ENCODE measurements at regions of chrX and their contacts with region 1.

Region 1: GRCh38 chrX:136920001-136920400 is 39.5 kb upstream of the RBMX start:
- DNase-seq: no peak
- ATAC-seq: no peak
- H3K4me3 Mint-ChIP-seq: no peak overlapping the region
- H3K27ac Mint-ChIP-seq: no peak overlapping the region
- H3K4me1 Mint-ChIP-seq: peaks cover 2% of the 10 kb centered on the region
- H3K27me3 Mint-ChIP-seq: no peaks in the 10 kb centered on the region

Region 2: GRCh38 chrX:136572030-136572429 is 348.0 kb before region 1 on chrX:
- CTCF ChIA-PET with region 1: no interaction called
- POLR2A ChIA-PET with region 1: no interaction called
- intact Hi-C with region 1: loop called in 1 of 2 experiments (anchors 5 kb)
- DNase-seq: no peak
- ATAC-seq: peak; percentile 39
- H3K4me3 Mint-ChIP-seq: no peak overlapping the region
- H3K27ac Mint-ChIP-seq: no peak overlapping the region
- H3K4me1 Mint-ChIP-seq: peaks cover 20% of the 10 kb centered on the region
- H3K27me3 Mint-ChIP-seq: no peaks in the 10 kb centered on the region

Region 3: DNA sequence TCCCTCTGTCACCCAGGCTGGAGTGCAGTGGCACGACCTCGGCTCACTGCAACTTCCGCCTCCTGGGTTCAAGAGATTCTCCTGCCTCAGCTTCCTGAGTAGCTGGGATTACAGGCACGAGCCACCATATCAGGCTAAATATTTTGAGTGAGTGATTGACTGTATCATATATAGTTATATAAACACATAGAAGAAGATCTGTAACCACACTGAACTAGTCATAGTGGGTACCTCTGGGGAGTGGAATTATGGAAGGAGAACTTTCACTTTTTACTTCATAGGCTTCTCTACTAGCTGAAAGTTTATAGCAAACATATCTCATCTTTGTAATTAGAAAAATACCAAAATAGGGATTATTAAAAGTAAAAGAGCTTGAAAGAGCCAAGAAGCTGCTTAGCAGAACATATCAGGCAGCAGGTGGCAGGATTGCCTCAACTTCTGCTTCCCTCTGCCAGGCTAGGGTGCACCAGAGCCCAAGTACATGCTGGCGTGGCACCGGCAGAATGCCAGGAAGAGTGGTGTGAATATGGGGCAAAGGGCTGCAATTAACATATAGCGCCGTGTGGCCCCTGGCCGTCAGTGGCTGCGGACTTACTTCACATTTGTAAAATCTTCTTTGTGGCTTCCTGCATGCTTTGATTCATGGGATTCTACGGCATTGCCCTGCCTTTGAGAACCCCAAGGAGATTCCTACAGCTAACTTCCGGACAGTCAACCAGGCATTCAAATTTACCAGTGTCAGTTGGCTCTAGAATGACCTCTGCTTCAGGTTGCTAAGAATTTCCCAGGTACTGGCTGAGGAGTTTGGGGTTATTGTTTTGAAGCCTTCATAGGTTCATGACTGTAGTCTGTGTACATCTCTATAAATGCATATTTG is 311.5 kb before region 1 on chrX:
- CTCF ChIA-PET with region 1: no interaction called
- POLR2A ChIA-PET with region 1: no interaction called
- intact Hi-C with region 1: loop called in 1 of 2 experiments (anchors 2 kb)
- DNase-seq: peak; percentile 79
- ATAC-seq: peak; percentile 84
- H3K4me3 Mint-ChIP-seq: peak overlapping the region; percentile 50
- H3K27ac Mint-ChIP-seq: peak overlapping the region; percentile 88
- H3K4me1 Mint-ChIP-seq: peaks cover 56% of the 10 kb centered on the region
- H3K27me3 Mint-ChIP-seq: no peaks in the 10 kb centered on the region

Region 4: DNA sequence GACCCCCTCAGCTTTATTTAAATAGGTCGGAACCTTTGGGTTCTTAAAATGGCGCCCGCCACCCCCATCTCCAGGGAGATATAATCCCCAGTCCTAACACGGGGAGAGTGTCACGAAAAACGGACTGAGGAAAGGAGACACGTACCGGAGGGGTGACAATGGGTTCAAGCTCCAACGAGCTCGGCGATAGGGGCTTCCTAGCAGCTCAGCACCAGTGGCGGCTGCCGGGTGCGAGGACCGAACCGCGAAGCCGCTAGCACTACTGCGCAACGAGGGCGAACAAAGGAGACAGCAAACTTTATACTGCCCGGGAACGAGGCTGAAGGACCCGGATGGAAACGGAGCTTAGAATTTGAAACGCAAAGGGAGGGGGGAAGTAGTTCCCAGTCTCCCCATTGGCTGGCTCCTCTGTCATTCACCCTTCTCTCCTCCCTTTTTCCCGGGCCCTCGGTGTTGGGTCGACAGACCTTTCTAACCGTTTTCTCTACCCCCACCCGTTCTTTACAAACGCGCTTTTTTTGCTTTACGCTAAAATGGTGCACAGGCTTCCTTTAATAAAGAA is 39.5 kb before region 1 on chrX and contains the start of gene RBMX:
- CTCF ChIA-PET with region 1: no interaction called
- POLR2A ChIA-PET with region 1: interaction called, 4 read pairs
- intact Hi-C with region 1: loop called in 1 of 2 experiments (anchors 1 kb)
- DNase-seq: peak; percentile 92
- ATAC-seq: peak; percentile 93
- H3K4me3 Mint-ChIP-seq: peak within 1 kb of the TSS; percentile 100
- H3K27ac Mint-ChIP-seq: peak within 1 kb of the TSS; percentile 100
- H3K4me1 Mint-ChIP-seq: peaks cover 19% of the 10 kb centered on the region
- H3K27me3 Mint-ChIP-seq: no peaks in the 10 kb centered on the region
- total RNA-seq, gene RBMX: 320 to 414 TPM

Region 5: GRCh38 chrX:136909706-136910564 is 10.1 kb before region 1 on chrX:
- CTCF ChIA-PET with region 1: interaction called, 6 read pairs
- POLR2A ChIA-PET with region 1: no interaction called
- intact Hi-C with region 1: loop called in 1 of 2 experiments (anchors 1 kb)
- DNase-seq: peak; percentile 75
- ATAC-seq: peak; percentile 78
- H3K4me3 Mint-ChIP-seq: peak overlapping the region; percentile 90
- H3K27ac Mint-ChIP-seq: peak overlapping the region; percentile 79
- H3K4me1 Mint-ChIP-seq: peaks cover 16% of the 10 kb centered on the region
- H3K27me3 Mint-ChIP-seq: no peaks in the 10 kb centered on the region

Measured in activated CD4-positive, alpha-beta T cell treated with anti-CD3 and anti-CD28 coated beads for 36 hours (primary cell).